Aorta (tissue), 5 donors: ENCODE measurements at regions of chr5 and their contacts with region 1.

Region 1: DNA sequence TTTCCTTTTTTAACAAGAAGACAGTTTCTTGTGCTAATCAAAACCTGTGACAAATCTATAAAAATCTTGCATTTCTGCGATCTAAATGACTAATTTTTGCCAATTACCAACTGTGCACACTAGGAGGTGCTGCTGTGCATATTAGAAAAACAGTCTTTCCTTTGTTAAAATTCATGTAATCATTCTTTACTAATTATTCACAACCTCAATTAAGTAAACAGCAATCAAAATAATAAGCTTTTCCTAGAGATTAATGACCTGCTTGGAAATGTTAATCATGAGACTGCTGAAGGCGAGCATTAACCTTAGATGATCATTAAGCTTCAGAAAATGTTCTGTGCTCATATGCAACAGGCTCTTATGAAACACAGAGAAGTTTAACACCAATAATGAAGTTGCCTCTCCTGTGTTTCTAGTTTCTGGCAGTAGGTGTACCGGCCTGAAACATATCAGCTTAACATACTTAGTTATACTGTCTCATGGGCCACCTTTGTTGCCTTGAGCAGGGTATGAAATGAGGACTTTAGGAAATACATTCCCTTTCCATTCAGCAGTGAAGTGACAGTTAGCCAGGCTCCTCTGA is 17.7 kb downstream of the RFESD start:
- DNase-seq: no peak
- ATAC-seq: no peak
- H3K4me3 ChIP-seq: no peak overlapping the region
- H3K27ac ChIP-seq: no peak overlapping the region
- H3K4me1 ChIP-seq: peaks cover 0 to under 1% of the 10 kb centered on the region in 2 donors
- H3K27me3 ChIP-seq: no peaks in the 10 kb centered on the region

Region 2: DNA sequence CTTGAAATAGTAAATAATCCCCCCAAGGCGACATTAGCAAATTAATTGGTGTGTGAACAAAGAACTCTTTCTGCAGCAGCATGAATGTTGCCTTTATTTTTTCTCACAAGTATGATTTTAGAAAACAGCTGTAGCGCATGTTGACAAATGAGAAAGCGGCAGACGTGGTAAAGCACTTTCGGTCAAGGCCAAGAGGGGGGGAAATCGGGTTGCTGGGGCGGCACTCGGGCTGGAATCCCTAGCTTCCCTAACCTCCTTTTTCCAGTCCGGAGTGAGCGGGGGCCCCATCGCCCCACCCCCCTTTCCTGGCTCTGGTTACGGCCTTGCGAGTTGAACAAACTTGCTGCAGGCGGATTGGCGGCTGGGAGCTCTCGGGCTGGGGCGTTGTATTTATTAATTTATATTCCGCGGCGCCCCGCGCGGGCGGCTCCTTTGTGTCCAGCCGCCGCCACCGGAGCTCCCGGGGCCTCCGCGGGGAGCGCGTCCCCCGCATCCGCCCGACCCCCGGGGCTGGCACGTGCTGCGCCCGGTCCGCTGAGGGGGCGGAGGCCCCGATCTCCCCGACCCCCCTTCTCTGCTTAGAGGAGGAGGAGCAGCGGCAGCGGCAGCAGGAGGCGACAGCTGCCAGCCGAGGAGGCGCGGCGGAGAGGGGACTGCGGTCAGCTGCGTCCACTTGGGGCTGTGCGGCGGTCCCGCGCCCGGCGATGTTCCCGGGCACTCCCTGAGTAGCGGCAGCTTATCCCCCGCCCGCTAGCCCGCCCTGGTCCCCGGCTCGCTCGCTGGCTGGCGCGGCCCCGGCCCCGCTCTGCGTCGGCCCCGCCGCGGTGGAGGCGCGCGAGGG is 66.7 kb after region 1 on chr5 and contains the start of gene RHOBTB3:
- intact Hi-C with region 1: loop called in 1 of 2 experiments (anchors 10 kb)
- DNase-seq: peak; percentile 92 to 93
- ATAC-seq: peak; percentile 79
- H3K4me3 ChIP-seq: peak within 1 kb of the TSS; percentile 38 to 80
- H3K27ac ChIP-seq: peak within 1 kb of the TSS in 1 of 2 donors; percentile 9
- H3K4me1 ChIP-seq: no peaks in the 10 kb centered on the region
- H3K27me3 ChIP-seq: no peaks in the 10 kb centered on the region
- total RNA-seq, gene RHOBTB3: 36.8 to 53.2 TPM

Region 3: GRCh38 chr5:95773335-95774059 is 109.2 kb after region 1 on chr5:
- intact Hi-C with region 1: loop called in 1 of 2 experiments (anchors 10 kb)
- DNase-seq: no peak
- ATAC-seq: no peak
- H3K4me3 ChIP-seq: no peak overlapping the region
- H3K27ac ChIP-seq: no peak overlapping the region
- H3K4me1 ChIP-seq: no peaks in the 10 kb centered on the region
- H3K27me3 ChIP-seq: no peaks in the 10 kb centered on the region

Region 4: DNA sequence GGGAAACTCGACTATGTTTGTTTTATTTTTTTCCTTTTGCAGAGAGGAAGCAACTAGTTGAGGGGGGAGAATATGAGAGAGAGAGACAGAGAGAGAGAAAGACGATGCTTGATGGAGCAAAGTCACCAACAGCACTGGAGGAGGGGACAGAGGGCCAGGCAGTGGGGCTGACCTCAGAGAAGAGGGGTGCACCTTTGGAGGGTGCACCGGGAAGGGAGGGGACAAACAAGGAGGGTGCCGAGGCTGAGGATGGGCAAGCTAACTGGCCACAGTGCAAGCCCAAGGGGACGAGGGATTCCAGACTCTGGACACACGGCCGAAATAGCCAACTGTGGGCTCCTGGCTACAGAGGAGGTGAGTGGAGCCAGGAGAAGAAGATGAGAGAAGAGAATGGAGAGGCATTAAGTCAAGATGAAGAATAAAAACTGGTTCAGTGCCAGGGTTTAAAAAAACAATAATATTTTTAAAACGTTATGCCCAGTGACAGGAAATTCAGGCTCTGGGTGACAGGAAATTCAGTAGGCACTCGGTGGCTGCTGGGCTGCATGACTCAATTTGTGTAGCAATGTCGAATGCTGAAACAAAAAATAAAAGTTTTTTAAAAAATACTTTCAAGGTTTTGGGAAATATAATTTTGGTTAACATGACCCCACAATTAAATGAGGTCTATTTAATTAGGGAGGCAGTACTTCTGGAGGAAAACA is 171.5 kb after region 1 on chr5:
- intact Hi-C with region 1: no loop called
- DNase-seq: peak in 1 of 2 donors; percentile 71
- ATAC-seq: peak; percentile 24
- H3K4me3 ChIP-seq: peak overlapping the region; percentile 0 to 71
- H3K27ac ChIP-seq: peak overlapping the region in 1 of 2 donors; percentile 43
- H3K4me1 ChIP-seq: peaks cover 0 to 7% of the 10 kb centered on the region in 2 donors
- H3K27me3 ChIP-seq: no peaks in the 10 kb centered on the region

Region 5: DNA sequence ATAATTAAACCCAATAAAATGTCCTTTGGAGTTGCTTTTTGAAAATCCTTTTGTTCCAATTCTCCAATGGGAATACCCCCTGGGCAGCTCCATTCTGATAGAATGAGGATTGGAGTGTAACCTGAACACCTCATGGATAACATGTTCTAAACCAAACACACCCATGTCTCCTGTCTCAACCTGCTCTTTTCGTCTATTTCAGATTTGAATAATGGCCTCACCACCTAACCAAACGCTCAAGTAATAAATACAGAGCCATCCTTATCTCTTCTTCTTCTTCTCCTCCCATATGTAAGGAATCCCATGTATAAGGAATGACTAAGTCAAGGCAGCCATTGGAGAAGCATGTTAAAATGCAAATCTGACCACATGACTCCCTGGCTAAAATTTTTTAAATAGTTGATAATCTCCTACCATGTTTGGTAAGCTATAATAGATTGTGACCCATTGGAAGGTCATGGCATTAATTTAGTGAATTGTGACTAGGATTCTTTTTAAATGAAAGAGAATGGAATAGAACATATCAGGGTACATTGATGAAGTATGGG is 271.3 kb after region 1 on chr5:
- intact Hi-C with region 1: no loop called
- DNase-seq: no peak
- ATAC-seq: no peak
- H3K4me3 ChIP-seq: no peak overlapping the region
- H3K27ac ChIP-seq: no peak overlapping the region
- H3K4me1 ChIP-seq: peaks cover 4 to 10% of the 10 kb centered on the region in 2 donors
- H3K27me3 ChIP-seq: no peaks in the 10 kb centered on the region